Activated CD8-positive, alpha-beta T cell treated with anti-CD3 and anti-CD28 coated beads for 36 hours (primary cell): ENCODE measurements at regions of chr22 and their contacts with region 1.

Region 1: DNA sequence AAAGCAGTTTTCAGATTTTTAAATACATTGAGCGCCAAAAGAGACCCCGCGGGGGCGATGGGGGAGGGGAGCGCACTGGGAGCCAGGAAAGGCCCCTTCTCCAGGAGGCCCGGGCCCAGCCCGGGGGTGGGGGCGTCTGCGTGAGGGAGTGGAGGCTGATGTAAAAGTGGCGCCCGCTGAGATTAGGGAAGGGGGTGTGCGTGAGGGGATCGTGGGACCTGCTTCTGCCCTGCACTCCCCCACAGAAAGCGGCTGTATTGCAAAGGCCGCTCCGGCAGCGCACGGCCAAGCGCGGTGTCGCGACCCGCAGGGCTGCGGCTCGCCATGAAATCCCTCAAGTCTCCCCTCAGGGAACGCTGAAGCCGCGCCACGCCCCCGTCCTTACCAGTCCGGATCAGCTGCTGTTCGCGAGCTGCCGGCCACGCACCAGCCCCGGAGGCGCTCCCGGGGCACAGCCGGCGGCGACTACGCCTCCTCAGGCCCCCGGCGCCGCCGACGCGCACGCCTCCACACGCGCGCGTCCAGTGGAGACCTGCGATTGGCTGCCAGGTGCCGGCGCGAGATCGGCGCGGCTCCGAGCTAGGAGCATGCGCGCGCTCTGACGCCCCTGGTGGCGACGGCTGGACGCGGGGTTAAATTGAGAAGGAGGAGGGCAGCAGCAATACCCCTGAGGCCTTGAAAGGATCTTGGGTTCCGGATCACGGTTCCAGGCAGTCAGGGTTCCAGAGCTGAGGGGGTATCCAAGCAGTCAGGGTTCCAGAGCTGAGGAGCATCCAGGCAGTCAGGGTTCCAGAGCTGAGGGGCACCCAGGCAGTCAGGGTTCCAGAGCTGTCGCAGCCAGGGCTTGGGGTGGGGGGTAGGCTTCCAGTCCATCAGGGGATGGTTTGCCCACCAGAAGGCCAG is at the start of gene ZNF280B:
- DNase-seq: peak; percentile 91
- ATAC-seq: peak; percentile 99
- H3K4me3 Mint-ChIP-seq: peak within 1 kb of the TSS; percentile 78
- H3K27ac Mint-ChIP-seq: peak within 1 kb of the TSS; percentile 65
- H3K4me1 Mint-ChIP-seq: peaks cover 13% of the 10 kb centered on the region
- H3K27me3 Mint-ChIP-seq: peaks cover 2% of the 10 kb centered on the region
- CTCF ChIP-seq: peak; percentile 76
- total RNA-seq, gene ZNF280B: 2.3 to 3.0 TPM

Region 2: DNA sequence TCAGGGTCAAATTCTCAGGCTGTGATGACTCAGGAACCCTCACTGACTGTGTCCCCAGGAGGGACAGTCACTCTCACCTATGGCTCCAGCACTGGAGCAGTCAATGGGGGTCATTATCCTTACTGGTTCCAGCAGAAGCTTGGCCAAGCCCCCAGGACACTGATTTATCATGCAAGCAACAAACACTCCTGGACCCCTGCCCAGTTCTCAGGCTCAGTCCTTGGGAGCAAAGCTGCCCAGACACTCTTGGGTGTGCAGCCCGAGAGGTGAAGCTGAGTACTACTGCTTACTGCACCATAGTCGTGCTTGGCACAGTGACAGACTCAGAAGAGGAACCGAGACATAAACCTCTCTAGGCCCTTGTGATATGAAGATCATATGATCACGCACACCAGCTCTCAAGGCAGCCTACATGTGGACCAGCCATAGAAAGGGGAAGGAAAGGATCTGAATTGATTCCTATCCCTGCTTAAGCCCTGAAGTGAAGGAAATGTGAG is 58.1 kb before region 1 on chr22:
- CTCF ChIA-PET with region 1: no interaction called
- POLR2A ChIA-PET with region 1: no interaction called
- intact Hi-C with region 1: no loop called
- DNase-seq: no peak
- ATAC-seq: no peak
- H3K4me3 Mint-ChIP-seq: no peak overlapping the region
- H3K27ac Mint-ChIP-seq: no peak overlapping the region
- H3K4me1 Mint-ChIP-seq: no peaks in the 10 kb centered on the region
- H3K27me3 Mint-ChIP-seq: peaks cover 33% of the 10 kb centered on the region
- CTCF ChIP-seq: no peak

Region 3: GRCh38 chr22:22488736-22489135 is 19.8 kb before region 1 on chr22:
- CTCF ChIA-PET with region 1: interaction called, 14 read pairs
- POLR2A ChIA-PET with region 1: interaction called, 4 read pairs
- intact Hi-C with region 1: no loop called
- DNase-seq: no peak
- ATAC-seq: no peak
- H3K4me3 Mint-ChIP-seq: no peak overlapping the region
- H3K27ac Mint-ChIP-seq: peak overlapping the region; percentile 31
- H3K4me1 Mint-ChIP-seq: no peaks in the 10 kb centered on the region
- H3K27me3 Mint-ChIP-seq: no peaks in the 10 kb centered on the region
- CTCF ChIP-seq: no peak

Region 4: GRCh38 chr22:22498267-22498666 is 10.3 kb before region 1 on chr22:
- CTCF ChIA-PET with region 1: interaction called, 16 read pairs
- POLR2A ChIA-PET with region 1: no interaction called
- intact Hi-C with region 1: no loop called
- DNase-seq: no peak
- ATAC-seq: no peak
- H3K4me3 Mint-ChIP-seq: no peak overlapping the region
- H3K27ac Mint-ChIP-seq: no peak overlapping the region
- H3K4me1 Mint-ChIP-seq: no peaks in the 10 kb centered on the region
- H3K27me3 Mint-ChIP-seq: no peaks in the 10 kb centered on the region
- CTCF ChIP-seq: no peak

Region 5: DNA sequence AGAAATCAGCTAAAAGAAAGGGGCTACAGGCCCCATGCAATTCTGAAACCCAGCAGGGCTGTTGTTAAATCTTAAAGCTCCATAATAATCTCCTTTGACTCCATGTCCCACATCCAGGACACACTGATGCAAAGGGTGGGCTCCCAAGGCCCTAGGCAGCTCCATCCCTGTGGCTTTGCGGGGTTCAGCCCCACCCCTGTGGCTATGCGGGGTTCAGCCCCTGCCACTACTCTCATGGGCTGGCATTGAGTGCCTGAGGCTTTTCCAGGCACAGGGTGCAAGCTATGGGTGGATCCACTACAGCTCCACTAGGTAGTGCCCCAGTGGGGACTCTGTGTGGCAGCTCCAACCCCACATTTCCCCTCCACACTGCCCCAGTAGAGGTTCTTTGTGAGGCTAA is 20.3 kb after region 1 on chr22:
- CTCF ChIA-PET with region 1: no interaction called
- POLR2A ChIA-PET with region 1: no interaction called
- intact Hi-C with region 1: no loop called
- DNase-seq: no peak
- ATAC-seq: no peak
- H3K4me3 Mint-ChIP-seq: no peak overlapping the region
- H3K27ac Mint-ChIP-seq: no peak overlapping the region
- H3K4me1 Mint-ChIP-seq: no peaks in the 10 kb centered on the region
- H3K27me3 Mint-ChIP-seq: no peaks in the 10 kb centered on the region
- CTCF ChIP-seq: no peak